IMR-90 (cell line): ENCODE measurements at regions of chr6 and their contacts with region 1.

Region 1: GRCh38 chr6:12895721-12896120 is 179.2 kb downstream of the PHACTR1 start:
- DNase-seq: no peak
- ATAC-seq: no peak
- H3K4me3 ChIP-seq: no peak overlapping the region
- H3K27ac ChIP-seq: no peak overlapping the region
- H3K4me1 ChIP-seq: no peaks in the 10 kb centered on the region
- H3K27me3 ChIP-seq: no peaks in the 10 kb centered on the region
- CTCF ChIP-seq: no peak
- POLR2A ChIP-seq: no peak
- RAD21 ChIP-seq: no peak

Region 2: GRCh38 chr6:12637960-12638641 is 257.6 kb before region 1 on chr6:
- CTCF ChIA-PET with region 1: interaction called, 3 read pairs
- POLR2A ChIA-PET with region 1: no interaction called
- dilution Hi-C with region 1: no loop called
- in situ Hi-C with region 1: loop called (anchors 25 kb)
- intact Hi-C with region 1: loop called (anchors 2 kb)
- DNase-seq: peak; percentile 31
- ATAC-seq: peak; percentile 69; the same call in 1 of the 2 replicates
- H3K4me3 ChIP-seq: no peak overlapping the region
- H3K27ac ChIP-seq: no peak overlapping the region
- H3K4me1 ChIP-seq: no peaks in the 10 kb centered on the region
- H3K27me3 ChIP-seq: no peaks in the 10 kb centered on the region
- CTCF ChIP-seq: peak; percentile 57
- POLR2A ChIP-seq: no peak
- RAD21 ChIP-seq: peak; percentile 54

Region 3: DNA sequence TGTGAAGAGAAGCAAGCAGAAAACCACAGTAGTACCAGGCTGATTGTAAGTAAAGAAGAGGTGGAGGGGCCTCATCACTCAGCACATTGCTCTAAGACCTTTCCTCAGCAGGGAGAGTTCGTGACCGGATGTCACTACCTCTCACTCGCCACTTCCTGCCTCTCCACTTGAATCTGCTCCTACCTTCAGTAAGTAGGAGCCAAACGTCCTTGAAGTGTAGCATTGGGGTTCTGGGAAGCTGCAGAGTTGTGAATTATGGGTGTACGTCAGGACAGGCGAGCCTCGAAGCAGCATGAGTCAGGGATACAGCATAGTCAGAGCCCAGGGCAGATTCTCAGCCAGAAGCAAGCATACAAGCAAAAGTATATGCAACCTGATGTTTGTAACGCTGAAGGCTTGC is 45.7 kb after region 1 on chr6:
- CTCF ChIA-PET with region 1: no interaction called
- POLR2A ChIA-PET with region 1: no interaction called
- dilution Hi-C with region 1: no loop called
- in situ Hi-C with region 1: no loop called
- intact Hi-C with region 1: no loop called
- DNase-seq: no peak
- ATAC-seq: no peak
- H3K4me3 ChIP-seq: no peak overlapping the region
- H3K27ac ChIP-seq: no peak overlapping the region
- H3K4me1 ChIP-seq: no peaks in the 10 kb centered on the region
- H3K27me3 ChIP-seq: no peaks in the 10 kb centered on the region
- CTCF ChIP-seq: no peak
- POLR2A ChIP-seq: no peak
- RAD21 ChIP-seq: no peak

Region 4: GRCh38 chr6:13183415-13184088 is 287.8 kb after region 1 on chr6:
- CTCF ChIA-PET with region 1: no interaction called
- POLR2A ChIA-PET with region 1: no interaction called
- dilution Hi-C with region 1: no loop called
- in situ Hi-C with region 1: no loop called
- intact Hi-C with region 1: no loop called
- DNase-seq: no peak
- ATAC-seq: no peak
- H3K4me3 ChIP-seq: no peak overlapping the region
- H3K27ac ChIP-seq: no peak overlapping the region
- H3K4me1 ChIP-seq: no peaks in the 10 kb centered on the region; the same call in 1 of the 2 replicates
- H3K27me3 ChIP-seq: peaks cover 6% of the 10 kb centered on the region; the same call in 1 of the 2 replicates
- CTCF ChIP-seq: no peak
- POLR2A ChIP-seq: no peak
- RAD21 ChIP-seq: no peak